ENCODE measurements at regions of chr12 and their contacts with region 1.

Region 1: DNA sequence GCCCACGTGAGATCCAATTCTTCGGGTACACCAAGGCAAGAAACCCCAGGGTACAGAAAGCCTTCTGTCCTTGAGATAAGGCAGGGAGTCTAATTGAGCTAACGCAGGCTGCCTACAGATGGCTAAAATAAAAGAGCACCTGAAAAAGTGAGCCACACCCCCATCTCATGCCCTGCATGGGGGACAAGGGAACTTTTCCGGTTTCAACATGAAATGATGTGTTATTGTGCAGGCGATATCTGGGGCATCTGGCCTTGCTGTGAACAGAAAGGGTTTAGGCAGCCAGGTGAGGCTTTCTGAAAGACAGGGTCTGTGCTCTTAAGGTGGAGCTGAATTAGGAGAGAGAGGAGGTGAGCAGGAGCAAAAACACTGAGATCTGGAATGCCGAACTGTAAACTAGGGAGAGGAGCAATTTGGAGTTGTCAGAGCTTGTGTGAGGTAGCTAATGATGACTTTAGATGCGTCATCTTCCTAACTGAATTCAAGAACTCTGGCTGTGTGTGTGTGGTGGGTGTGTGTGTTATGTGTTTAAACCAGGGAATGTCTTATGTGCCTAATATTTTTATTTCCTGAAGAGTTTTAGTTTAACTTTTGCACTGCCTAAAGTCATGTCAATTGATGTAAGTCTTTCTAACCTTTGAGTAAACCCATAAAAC is 20.1 kb upstream of the LDHB start:
- DNase-seq: no peak
- H3K4me3 ChIP-seq: no peak overlapping the region
- H3K27ac ChIP-seq: no peak overlapping the region
- H3K4me1 ChIP-seq: peaks cover 9% of the 10 kb centered on the region
- H3K27me3 ChIP-seq: no peaks in the 10 kb centered on the region
- CTCF ChIP-seq: no peak

Region 2: DNA sequence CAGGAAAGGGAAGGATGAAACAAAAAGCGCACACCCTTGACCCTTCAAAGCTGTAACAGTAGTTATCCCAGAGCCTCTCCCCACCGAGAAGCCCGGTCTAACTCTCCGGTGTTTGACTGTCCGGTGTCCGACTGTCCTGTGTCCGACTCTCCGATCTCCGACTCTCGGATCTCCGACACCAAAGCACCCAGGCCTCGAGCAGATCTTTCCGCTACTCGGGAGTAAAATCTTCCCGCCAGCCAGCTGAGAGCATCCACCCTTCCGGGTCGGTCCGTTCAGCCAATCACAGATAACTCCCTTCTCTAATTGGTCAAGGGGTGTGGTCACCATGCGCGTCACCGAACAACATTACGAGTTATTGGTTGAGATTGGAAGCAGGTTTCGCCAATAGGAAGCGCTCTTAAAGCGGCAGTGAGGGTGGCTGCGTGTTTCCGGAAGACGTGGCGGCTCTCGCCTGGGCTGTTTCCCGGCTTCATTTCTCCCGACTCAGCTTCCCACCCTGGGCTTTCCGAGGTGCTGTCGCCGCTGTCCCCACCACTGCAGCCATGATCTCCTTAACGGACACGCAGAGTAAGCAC is 176.3 kb before region 1 on chr12 and contains the starts of genes GOLT1B and RECQL:
- intact Hi-C with region 1: loop called (anchors 10 kb)
- DNase-seq: peak; percentile 91
- H3K4me3 ChIP-seq: peak within 1 kb of the TSS; percentile 94
- H3K27ac ChIP-seq: peak within 1 kb of the TSS; percentile 87
- H3K4me1 ChIP-seq: peaks cover 76% of the 10 kb centered on the region
- H3K27me3 ChIP-seq: no peaks in the 10 kb centered on the region
- CTCF ChIP-seq: no peak
- total RNA-seq, gene GOLT1B: 17.5 TPM
- total RNA-seq, gene RECQL: 23.1 TPM

Region 3: DNA sequence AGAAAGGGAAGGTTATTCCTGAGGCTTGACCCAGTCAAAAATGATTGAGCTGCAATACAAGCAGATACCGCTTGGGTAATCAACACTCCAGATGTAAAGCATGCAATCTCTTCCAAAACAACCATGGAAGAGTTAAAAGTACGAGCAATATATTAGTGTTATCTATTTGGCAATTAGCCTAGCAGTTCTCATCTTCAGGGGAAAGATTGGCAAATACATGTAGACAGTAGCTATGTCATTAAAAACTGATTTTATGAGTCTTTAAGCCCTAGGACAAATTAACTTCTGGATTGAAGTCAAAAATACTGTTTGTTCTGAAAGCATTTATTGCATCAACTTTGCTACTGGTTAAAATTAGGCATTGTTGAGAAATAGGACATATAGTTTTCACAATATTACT is 63.8 kb before region 1 on chr12:
- intact Hi-C with region 1: loop called (anchors 5 kb)
- DNase-seq: no peak
- H3K4me3 ChIP-seq: no peak overlapping the region
- H3K27ac ChIP-seq: no peak overlapping the region
- H3K4me1 ChIP-seq: peaks cover 22% of the 10 kb centered on the region
- H3K27me3 ChIP-seq: no peaks in the 10 kb centered on the region
- CTCF ChIP-seq: peak; percentile 28